ENCODE measurements at regions of chr1 and their contacts with region 1.

Region 1: DNA sequence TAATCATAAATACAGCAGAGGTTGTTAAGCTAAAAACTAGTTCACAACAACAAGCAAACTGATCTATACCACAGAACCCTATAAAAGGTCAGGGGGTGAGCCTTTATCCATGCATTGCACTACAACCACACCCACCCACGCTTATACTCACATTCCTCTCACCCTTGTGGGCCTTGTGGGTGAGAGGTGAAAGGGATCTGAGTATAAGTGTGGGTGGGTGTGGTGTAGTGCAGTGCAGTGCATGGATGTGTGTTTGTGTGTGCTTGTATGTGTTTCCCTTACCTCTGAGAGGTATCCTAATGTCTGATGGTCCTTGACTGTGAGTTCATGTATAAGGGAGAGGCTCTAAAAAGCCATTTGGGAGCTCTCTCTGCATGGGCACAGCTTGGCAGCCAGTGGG is 95.4 kb upstream of the DPT start:
- DNase-seq: no peak
- ATAC-seq: peak; percentile 54

Region 2: DNA sequence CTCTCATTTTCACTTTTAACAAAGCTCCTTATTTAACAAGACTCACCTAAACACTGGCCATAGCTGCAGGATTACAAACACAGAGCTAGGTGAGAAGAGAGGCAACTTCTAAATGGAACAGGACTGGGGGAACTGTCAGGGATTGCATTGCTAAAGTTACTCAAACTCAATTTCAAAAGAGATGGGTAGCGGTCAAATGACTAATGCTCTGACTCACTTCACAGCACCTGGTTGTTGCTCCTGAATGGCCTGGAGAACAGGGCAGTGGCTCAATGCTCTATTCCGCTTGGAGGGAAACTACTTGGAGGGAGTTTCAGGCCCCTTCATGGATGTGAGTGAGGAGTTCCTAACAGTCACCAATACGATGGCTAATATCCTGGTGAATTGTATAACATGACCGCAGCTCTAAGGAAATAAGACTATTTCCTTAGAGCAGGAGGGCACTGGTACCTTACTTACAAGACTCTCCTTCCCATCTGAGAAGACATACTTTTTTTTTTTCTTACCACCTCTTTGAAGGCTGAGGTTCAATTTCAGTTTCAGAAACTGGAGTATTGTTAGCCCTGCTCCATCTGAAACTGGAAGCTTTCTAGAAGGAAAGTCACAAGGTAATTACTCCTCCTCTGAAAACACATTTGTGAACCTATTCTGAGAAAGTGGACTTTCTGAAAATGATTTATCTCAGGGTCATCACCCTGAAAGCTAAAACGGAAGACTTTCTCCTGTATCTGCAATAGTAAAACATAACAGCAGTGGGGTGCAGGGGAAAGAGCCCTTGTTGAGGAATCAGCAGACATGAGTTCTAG is 104.9 kb before region 1 on chr1:
- intact Hi-C with region 1: loop called (anchors 5 kb)
- DNase-seq: no peak
- ATAC-seq: no peak

Region 3: GRCh38 chr1:168774241-168774640 is 50.2 kb before region 1 on chr1:
- intact Hi-C with region 1: loop called (anchors 5 kb)
- DNase-seq: peak; percentile 71
- ATAC-seq: peak; percentile 98

Measured in Right ventricle myocardium inferior (tissue), 1 donor.